Ovary (tissue), 10 donors: ENCODE measurements at regions of chr3 and their contacts with region 1.

Region 1: GRCh38 chr3:57659806-57660439 is 33.0 kb downstream of the DENND6A start:
- DNase-seq: no peak
- H3K4me3 ChIP-seq: no peak overlapping the region
- H3K27ac ChIP-seq: no peak overlapping the region
- H3K4me1 ChIP-seq: peaks cover 2% of the 10 kb centered on the region
- H3K27me3 ChIP-seq: no peaks in the 10 kb centered on the region
- CTCF ChIP-seq: no peak
- EP300 ChIP-seq: no peak
- POLR2A ChIP-seq: no peak

Region 2: GRCh38 chr3:57370341-57370740 is 289.6 kb before region 1 on chr3:
- intact Hi-C with region 1: no loop called
- DNase-seq: no peak
- H3K4me3 ChIP-seq: no peak overlapping the region
- H3K27ac ChIP-seq: no peak overlapping the region
- H3K4me1 ChIP-seq: no peaks in the 10 kb centered on the region
- H3K27me3 ChIP-seq: no peaks in the 10 kb centered on the region
- CTCF ChIP-seq: no peak
- EP300 ChIP-seq: no peak
- POLR2A ChIP-seq: no peak

Region 3: GRCh38 chr3:57764794-57765193 is 104.9 kb after region 1 on chr3:
- intact Hi-C with region 1: loop called in 1 of 4 experiments (anchors 10 kb)
- DNase-seq: no peak
- H3K4me3 ChIP-seq: no peak overlapping the region
- H3K27ac ChIP-seq: no peak overlapping the region
- H3K4me1 ChIP-seq: peaks cover 11% of the 10 kb centered on the region
- H3K27me3 ChIP-seq: no peaks in the 10 kb centered on the region
- CTCF ChIP-seq: no peak
- EP300 ChIP-seq: no peak
- POLR2A ChIP-seq: no peak